CD14-positive monocyte (primary cell): ENCODE measurements at regions of chr4 and their contacts with region 1.

Region 1: DNA sequence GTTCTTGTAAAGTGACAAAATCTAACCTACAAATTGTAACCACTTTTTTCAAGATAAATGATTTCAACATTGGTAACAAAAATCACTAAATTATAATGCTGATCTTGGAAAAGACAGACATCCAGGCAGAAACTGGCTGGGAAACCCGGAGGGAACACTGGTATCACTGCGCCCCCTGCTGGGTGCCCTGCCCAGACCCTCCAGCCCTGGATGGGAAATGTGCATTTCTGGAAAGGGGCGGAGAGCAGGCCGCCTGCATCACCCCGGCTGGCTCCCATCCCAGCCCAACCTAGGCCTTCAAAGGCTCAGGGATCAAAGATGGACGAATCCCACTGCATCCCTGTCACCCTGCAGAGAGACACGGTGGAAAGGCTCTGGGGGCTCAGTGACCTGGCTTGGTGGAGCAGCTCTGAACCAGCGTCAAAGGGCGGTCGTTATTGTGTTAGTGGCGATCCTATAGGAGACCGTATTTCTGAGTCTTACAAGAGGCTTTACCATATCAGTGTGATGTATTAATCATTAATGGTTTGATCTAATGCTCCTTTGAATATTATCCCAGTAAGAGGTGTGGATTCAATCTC is 37.3 kb downstream of the ACOX3 start:
- DNase-seq: peak; percentile 41 to 67 (median 60)
- H3K4me3 ChIP-seq: peak overlapping the region in 1 of 3 experiments; percentile 55
- H3K4me3 Mint-ChIP-seq: peak overlapping the region; percentile 41 to 76
- H3K27ac ChIP-seq: peak overlapping the region in 1 of 2 donors; percentile 39
- H3K27ac Mint-ChIP-seq: peak overlapping the region in 4 of 7 donors; percentile 30 to 79 (median 68)
- H3K4me1 ChIP-seq: peaks cover 18 to 22% of the 10 kb centered on the region in 2 donors
- H3K4me1 Mint-ChIP-seq: peaks cover 31% of the 10 kb centered on the region
- H3K27me3 ChIP-seq: no peaks in the 10 kb centered on the region
- H3K27me3 Mint-ChIP-seq: peaks cover 0 to 2% (median 1%) of the 10 kb centered on the region in 3 donors
- CTCF ChIP-seq: peak; percentile 99

Region 2: DNA sequence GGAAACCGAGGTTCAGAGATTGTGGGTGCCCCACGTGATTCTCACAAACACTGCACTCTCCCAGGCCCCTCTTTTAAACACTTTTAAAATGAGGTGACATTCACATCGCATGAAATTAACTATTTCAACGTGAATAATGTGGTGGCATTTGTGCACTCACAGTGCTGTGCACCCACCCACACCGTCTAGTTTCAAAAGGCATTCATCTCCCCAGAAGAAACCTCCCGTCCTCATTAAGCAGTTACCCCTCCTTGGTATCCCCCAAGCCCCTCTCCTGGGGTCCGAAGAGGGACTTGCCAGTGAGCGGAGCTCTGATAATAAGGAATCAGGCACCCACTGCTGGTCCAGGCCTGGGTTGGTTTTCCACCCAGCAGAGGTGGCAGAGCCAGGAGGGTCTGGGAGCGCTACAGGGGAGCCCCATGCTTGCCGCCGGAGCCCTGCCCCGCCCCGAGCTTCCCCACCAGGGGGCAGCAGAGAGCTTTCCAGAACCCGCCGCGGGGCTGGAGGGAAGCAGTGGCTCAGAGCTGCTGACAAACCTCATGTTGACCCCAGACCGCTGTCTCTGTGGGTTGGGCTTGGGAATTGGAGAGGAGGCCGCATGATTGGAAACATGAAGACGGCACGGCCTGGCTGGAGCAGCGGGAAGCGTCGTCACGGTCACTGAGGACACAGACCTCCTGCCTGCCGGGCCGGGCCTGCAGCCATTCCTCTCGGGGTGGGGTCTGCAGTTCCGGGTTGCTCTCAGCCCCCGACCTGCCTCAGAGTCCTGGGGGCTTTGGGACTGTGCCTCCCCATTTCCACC is 161.2 kb before region 1 on chr4:
- intact Hi-C with region 1: loop called (anchors 1 to 2 kb)
- DNase-seq: peak; percentile 61 to 67 (median 66)
- H3K4me3 ChIP-seq: no peak overlapping the region
- H3K4me3 Mint-ChIP-seq: no peak overlapping the region
- H3K27ac ChIP-seq: no peak overlapping the region
- H3K27ac Mint-ChIP-seq: peak overlapping the region in 2 of 7 donors; percentile 63 to 85
- H3K4me1 ChIP-seq: peaks cover 19 to 25% of the 10 kb centered on the region in 2 donors
- H3K4me1 Mint-ChIP-seq: peaks cover 48% of the 10 kb centered on the region
- H3K27me3 ChIP-seq: no peaks in the 10 kb centered on the region
- H3K27me3 Mint-ChIP-seq: peaks cover 1 to 3% (median 1%) of the 10 kb centered on the region in 3 donors
- CTCF ChIP-seq: peak; percentile 97

Region 3: GRCh38 chr4:8267077-8267476 is 136.2 kb before region 1 on chr4:
- intact Hi-C with region 1: loop called in 1 of 2 experiments (anchors 5 kb)
- DNase-seq: peak in 2 of 3 donors; percentile 15 to 32
- H3K4me3 ChIP-seq: no peak overlapping the region
- H3K4me3 Mint-ChIP-seq: no peak overlapping the region
- H3K27ac ChIP-seq: no peak overlapping the region
- H3K27ac Mint-ChIP-seq: no peak overlapping the region
- H3K4me1 ChIP-seq: peaks cover 7 to 22% of the 10 kb centered on the region in 2 donors
- H3K4me1 Mint-ChIP-seq: peaks cover 18% of the 10 kb centered on the region
- H3K27me3 ChIP-seq: peaks cover 0 to 19% of the 10 kb centered on the region in 2 donors
- H3K27me3 Mint-ChIP-seq: peaks cover 18 to 24% (median 22%) of the 10 kb centered on the region in 3 donors
- CTCF ChIP-seq: peak; percentile 70

Region 4: DNA sequence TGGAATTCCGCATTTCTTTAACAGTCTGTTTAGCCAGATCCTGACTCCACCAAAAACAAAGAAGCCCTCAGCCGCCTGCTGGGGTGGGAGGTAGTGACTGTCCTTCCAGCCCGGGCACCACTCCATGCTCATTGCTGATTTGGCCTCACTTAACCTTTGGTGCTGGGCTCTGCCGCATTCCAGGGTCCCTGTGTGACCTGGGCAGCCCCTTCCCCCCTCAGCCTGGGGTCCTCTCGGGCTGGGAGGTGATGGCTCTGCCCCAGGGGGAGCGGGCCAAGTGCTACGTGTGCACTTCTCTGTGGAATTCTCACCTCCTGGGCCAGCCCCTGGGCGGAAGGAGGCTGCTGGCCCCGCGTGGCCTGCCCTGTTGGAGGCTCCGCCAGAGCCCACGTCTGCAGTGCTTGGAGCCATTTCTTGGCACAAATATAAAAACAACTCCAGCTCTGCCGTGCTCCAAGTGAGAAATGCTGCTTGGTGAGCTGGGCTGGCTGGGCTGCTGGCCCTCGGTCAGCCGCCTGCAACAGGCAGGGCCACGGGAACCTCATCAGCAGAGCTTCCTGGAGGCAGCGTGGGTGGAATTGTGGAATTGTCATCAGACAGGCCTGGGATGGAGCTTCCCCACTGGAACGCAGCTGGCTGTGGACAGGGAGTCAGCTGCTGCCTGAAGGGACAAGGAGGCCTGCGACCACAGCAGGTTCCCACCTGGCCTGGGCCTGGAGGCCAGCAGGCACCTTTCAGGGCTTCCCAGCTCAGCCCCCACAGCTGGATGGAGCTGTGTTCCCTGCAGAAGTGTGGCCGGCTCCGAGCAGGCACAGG is 103.3 kb after region 1 on chr4:
- intact Hi-C with region 1: no loop called
- DNase-seq: no peak
- H3K4me3 ChIP-seq: no peak overlapping the region
- H3K4me3 Mint-ChIP-seq: no peak overlapping the region
- H3K27ac ChIP-seq: no peak overlapping the region
- H3K27ac Mint-ChIP-seq: no peak overlapping the region
- H3K4me1 ChIP-seq: no peaks in the 10 kb centered on the region
- H3K4me1 Mint-ChIP-seq: no peaks in the 10 kb centered on the region
- H3K27me3 ChIP-seq: no peaks in the 10 kb centered on the region
- H3K27me3 Mint-ChIP-seq: peaks cover 0 to 5% (median 4%) of the 10 kb centered on the region in 3 donors
- CTCF ChIP-seq: no peak